A549 (cell line): ENCODE measurements at regions of chr5 and their contacts with region 1.

Region 1: DNA sequence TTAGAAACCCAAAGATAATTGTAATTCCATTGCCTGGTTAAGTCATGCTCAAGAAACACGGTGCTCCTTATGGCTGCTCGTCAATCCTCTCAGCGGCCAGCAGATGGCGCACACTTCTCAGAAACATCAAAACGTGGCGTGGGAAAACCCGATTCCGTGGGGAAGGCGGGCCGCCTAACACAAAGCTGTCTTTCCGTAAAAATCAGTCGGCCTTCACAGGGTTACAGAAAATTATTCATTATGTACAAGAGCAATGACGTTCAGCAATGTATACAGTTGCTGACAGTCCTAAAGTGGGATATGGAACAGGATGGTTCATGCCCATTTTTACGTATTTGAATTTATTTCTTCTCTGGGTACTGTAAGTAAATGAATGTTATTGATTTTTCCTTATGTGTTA is 83.5 kb downstream of the PDE4D start:
- DNase-seq: peak; percentile 70 to 82
- ATAC-seq: peak in 1 of 2 experiments; percentile 80; a peak in 3 of 6 replicates
- H3K4me3 ChIP-seq: peak overlapping the region; percentile 28; the same call in 1 of the 3 replicates
- H3K27ac ChIP-seq: no peak overlapping the region
- H3K4me1 ChIP-seq: peaks cover 11% of the 10 kb centered on the region; the same call in 2 of the 3 replicates
- CTCF ChIP-seq: peak; percentile 93
- EP300 ChIP-seq: no peak
- POLR2A ChIP-seq: no peak
- RAD21 ChIP-seq: peak; percentile 84 to 89

Region 2: GRCh38 chr5:59823420-59823819 is 13.4 kb after region 1 on chr5:
- CTCF ChIA-PET with region 1: interaction called, 15 read pairs
- POLR2A ChIA-PET with region 1: no interaction called
- DNase-seq: no peak
- ATAC-seq: no peak
- H3K4me3 ChIP-seq: no peak overlapping the region
- H3K27ac ChIP-seq: no peak overlapping the region
- H3K4me1 ChIP-seq: no peaks in the 10 kb centered on the region
- CTCF ChIP-seq: no peak
- EP300 ChIP-seq: no peak
- POLR2A ChIP-seq: no peak
- RAD21 ChIP-seq: no peak

Region 3: GRCh38 chr5:60287174-60287771 is 477.2 kb after region 1 on chr5:
- CTCF ChIA-PET with region 1: interaction called, 26 read pairs
- POLR2A ChIA-PET with region 1: no interaction called
- DNase-seq: peak; percentile 18 to 88
- ATAC-seq: peak; percentile 87 to 96
- H3K4me3 ChIP-seq: no peak overlapping the region
- H3K27ac ChIP-seq: no peak overlapping the region
- H3K4me1 ChIP-seq: no peaks in the 10 kb centered on the region
- CTCF ChIP-seq: peak; percentile 60
- EP300 ChIP-seq: no peak
- POLR2A ChIP-seq: no peak
- RAD21 ChIP-seq: peak; percentile 61 to 83

Region 4: DNA sequence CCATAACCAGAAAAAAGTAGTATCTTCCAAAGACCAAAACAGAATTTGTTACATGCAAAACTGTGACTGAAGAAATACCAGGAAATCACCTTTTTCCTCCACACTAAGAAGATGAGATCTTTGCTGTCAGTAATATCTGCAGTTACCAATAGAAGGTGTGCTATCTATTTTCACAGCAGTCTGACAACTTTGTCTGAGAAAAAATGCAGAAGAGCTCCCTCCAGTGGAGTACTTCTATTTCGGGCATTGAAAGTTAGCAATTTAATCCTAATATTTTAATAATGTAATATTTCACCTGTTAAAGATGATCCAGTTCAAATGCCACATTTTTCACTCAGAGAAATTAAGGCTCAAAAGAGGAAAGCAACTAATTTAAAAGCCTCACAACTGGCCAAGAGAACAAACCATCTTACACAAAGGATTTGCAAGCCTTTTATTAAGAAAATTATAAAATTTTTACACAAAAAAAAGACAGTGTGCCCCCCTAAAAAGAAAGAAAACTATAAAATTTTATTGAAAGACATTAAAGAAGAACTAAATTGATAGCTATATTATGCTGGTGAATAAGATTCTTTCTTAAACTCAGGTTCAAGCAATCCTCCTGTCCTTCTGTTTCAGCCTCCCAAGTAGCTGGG is 839.4 kb after region 1 on chr5:
- CTCF ChIA-PET with region 1: interaction called, 21 read pairs
- POLR2A ChIA-PET with region 1: no interaction called
- DNase-seq: peak; percentile 34 to 58
- ATAC-seq: peak; percentile 71 to 73; a peak in 4 of 6 replicates
- H3K4me3 ChIP-seq: no peak overlapping the region
- H3K27ac ChIP-seq: no peak overlapping the region
- H3K4me1 ChIP-seq: peaks cover 10% of the 10 kb centered on the region; the same call in 2 of the 3 replicates
- CTCF ChIP-seq: peak; percentile 87
- EP300 ChIP-seq: no peak
- POLR2A ChIP-seq: no peak
- RAD21 ChIP-seq: peak; percentile 63 to 67

Region 5: DNA sequence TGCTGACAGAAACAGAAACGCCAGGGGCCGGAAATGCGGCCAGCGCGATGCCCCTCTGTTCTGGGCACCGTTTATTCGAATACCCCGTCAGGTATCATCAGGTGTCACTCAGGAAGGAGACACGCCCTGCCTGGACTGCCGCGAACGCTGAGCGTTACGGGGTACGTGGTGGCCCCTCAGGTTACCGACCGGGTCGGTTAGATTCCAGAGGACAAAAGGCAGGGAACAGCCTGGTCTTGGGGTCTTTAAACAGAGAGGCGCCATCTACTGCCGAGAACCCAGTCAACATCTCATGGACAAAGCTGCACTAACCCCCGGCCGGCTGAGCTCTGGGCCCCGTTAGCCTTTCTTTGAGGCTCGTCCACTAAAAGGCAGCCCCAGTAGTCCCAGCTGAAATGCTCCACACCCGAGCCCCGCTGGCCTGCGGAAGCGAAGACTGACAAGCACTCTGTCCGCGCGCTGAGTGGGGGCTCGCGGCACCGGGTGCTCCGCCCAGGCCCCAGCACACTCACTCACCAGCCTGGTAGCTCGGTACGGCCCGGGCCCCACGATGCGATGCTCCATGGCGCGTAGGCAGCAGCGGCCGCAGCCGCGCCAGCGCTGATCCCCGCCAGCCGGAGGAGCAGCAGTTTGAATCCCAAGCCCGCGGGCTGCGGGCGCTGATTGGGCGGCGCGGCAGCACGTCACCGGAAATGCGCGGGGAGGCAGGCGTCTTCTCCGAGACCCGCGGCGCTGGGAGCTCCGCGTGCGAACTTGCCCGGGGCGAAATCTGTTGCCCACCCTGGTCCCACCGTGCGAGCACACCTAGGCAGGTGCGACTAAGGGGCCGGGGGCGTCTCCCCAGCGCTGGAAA is 889.7 kb after region 1 on chr5 and contains the start of gene DEPDC1B:
- CTCF ChIA-PET with region 1: interaction called, 12 read pairs
- POLR2A ChIA-PET with region 1: no interaction called
- DNase-seq: peak; percentile 79 to 92
- ATAC-seq: peak; percentile 97
- H3K4me3 ChIP-seq: peak within 1 kb of the TSS; percentile 74
- H3K27ac ChIP-seq: peak within 1 kb of the TSS; percentile 87 to 93
- H3K4me1 ChIP-seq: peaks cover 38% of the 10 kb centered on the region
- CTCF ChIP-seq: peak; percentile 50
- EP300 ChIP-seq: no peak
- POLR2A ChIP-seq: peak; percentile 66
- RAD21 ChIP-seq: peak; percentile 34 to 35; a peak in 2 of 5 replicates
- polyA plus RNA-seq, gene DEPDC1B: 27.2 and 34.8 TPM in 2 replicates